CD4-positive, alpha-beta memory T cell (primary cell): ENCODE measurements at regions of chrX and their contacts with region 1.

Region 1: GRCh38 chrX:73262992-73263391 is 48.3 kb upstream of the NAP1L2 start:
- DNase-seq: peak in 2 of 5 donors; percentile 0 to 7
- H3K4me3 ChIP-seq: no peak overlapping the region
- H3K4me3 Mint-ChIP-seq: no peak overlapping the region
- H3K27ac ChIP-seq: no peak overlapping the region
- H3K27ac Mint-ChIP-seq: no peak overlapping the region
- H3K4me1 ChIP-seq: no peaks in the 10 kb centered on the region
- H3K4me1 Mint-ChIP-seq: no peaks in the 10 kb centered on the region
- H3K27me3 ChIP-seq: no peaks in the 10 kb centered on the region
- H3K27me3 Mint-ChIP-seq: peaks cover 2% of the 10 kb centered on the region in 2 donors

Region 2: GRCh38 chrX:73076838-73077237 is 186.2 kb before region 1 on chrX:
- CTCF ChIA-PET with region 1: no interaction called
- POLR2A ChIA-PET with region 1: no interaction called
- intact Hi-C with region 1: loop called (anchors 10 kb)
- DNase-seq: no peak
- H3K4me3 ChIP-seq: no peak overlapping the region
- H3K4me3 Mint-ChIP-seq: no peak overlapping the region
- H3K27ac ChIP-seq: no peak overlapping the region
- H3K27ac Mint-ChIP-seq: no peak overlapping the region
- H3K4me1 ChIP-seq: no peaks in the 10 kb centered on the region
- H3K4me1 Mint-ChIP-seq: no peaks in the 10 kb centered on the region
- H3K27me3 ChIP-seq: no peaks in the 10 kb centered on the region
- H3K27me3 Mint-ChIP-seq: peaks cover 5 to 7% of the 10 kb centered on the region in 2 donors